ENCODE measurements at regions of chr11 and their contacts with region 1.

Region 1: GRCh38 chr11:11841723-11842420 is at the start of gene USP47:
- DNase-seq: peak; percentile 97
- ATAC-seq: peak; percentile 54
- H3K4me3 Mint-ChIP-seq: no peak within 1 kb of the TSS
- H3K27ac Mint-ChIP-seq: no peak within 1 kb of the TSS
- H3K4me1 Mint-ChIP-seq: peaks cover 28% of the 10 kb centered on the region
- H3K27me3 Mint-ChIP-seq: peaks cover 8% of the 10 kb centered on the region
- total RNA-seq, gene USP47: 43.3 to 56.3 TPM

Region 2: DNA sequence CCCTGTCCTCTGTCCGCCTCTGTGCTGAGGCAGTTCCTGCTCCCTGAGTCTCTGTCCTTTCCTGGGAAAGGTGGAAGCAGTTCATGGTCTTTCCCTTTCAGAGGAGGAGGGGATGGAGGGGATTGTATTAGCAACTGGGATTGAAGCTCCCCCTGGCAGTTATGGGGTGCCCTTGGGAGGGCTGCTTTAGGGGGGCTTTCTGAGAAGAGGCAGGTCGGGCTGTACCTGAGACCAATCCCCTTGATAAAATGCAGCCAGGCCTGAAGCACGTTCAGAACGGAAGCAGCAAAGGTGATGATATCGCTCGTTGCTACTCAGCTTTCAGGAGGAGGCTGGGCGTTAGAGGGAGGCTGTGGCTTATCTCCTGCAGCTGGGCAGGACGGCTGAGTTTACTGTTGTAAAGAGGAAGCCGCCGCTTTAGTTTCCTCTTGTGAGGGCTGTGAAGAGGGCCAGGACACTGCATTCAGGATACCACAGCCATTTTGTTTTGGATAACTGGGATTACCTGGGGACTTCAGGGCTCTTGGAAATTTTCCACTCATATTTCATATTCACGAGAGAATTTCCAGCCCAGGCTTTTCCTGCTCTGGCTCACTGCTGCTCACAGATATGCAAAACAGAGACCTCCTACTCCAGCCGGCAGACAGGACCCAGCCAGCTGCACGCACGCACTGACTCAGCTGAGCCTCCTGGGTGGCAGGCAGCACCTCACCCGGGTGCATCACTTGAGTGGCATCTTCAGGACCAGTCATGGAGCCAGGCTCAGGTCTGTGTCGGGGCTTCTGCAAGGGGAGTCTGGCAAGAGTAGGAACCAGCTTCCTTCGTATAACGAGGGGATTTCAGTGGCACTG is 1386.0 kb before region 1 on chr11:
- CTCF ChIA-PET with region 1: no interaction called
- POLR2A ChIA-PET with region 1: interaction called, 3 read pairs
- intact Hi-C with region 1: loop called (anchors 5 to 10 kb)
- DNase-seq: peak; percentile 91
- ATAC-seq: peak; percentile 80
- H3K4me3 Mint-ChIP-seq: peak overlapping the region; percentile 91
- H3K27ac Mint-ChIP-seq: peak overlapping the region; percentile 98
- H3K4me1 Mint-ChIP-seq: peaks cover 88% of the 10 kb centered on the region
- H3K27me3 Mint-ChIP-seq: no peaks in the 10 kb centered on the region

Region 3: DNA sequence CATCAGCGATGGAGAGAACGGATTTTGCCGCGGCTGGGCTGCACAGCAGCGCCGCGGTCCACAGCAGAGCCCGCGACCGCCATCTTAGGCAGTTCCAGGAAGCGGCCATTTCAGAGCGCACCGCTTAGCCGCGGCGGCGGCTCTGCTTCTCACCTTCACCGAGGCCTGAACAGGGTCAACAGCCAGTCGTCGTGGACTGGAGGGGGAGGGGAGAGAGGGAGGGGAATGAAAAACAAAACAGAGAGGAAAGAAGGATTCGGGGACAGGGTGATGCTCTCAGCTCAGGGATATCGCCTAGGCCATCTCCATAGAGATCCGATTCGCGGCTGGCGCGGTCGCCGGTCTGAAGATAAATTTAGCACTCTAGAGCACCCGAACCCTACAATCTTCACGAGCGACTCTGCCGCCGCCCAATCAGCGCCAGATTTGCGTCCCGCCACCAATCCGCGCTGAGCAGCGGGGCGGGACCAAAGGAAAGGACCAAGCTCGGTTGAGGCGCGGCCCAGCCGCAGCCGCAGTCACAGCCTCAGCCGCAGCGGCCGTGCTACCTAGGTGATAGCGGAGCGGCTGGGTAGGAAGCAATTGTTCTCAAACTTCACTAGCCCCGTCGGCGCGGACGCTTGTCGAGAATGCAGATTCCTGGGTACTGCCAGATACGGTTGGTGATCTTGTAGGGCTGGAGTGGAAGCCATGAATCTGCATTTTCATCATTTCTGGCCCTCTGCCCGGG is 984.0 kb before region 1 on chr11 and contains the start of gene ZBED5:
- CTCF ChIA-PET with region 1: no interaction called
- POLR2A ChIA-PET with region 1: interaction called, 4 read pairs
- intact Hi-C with region 1: loop called (anchors 1 to 5 kb)
- DNase-seq: peak; percentile 98
- ATAC-seq: peak; percentile 93
- H3K4me3 Mint-ChIP-seq: peak within 1 kb of the TSS; percentile 100
- H3K27ac Mint-ChIP-seq: peak within 1 kb of the TSS; percentile 100
- H3K4me1 Mint-ChIP-seq: peaks cover 40% of the 10 kb centered on the region
- H3K27me3 Mint-ChIP-seq: no peaks in the 10 kb centered on the region
- total RNA-seq, gene ZBED5: 34.1 to 44.3 TPM

Region 4: GRCh38 chr11:11657218-11657955 is 184.5 kb before region 1 on chr11:
- CTCF ChIA-PET with region 1: no interaction called
- POLR2A ChIA-PET with region 1: no interaction called
- intact Hi-C with region 1: no loop called
- DNase-seq: no peak
- ATAC-seq: no peak
- H3K4me3 Mint-ChIP-seq: no peak overlapping the region
- H3K27ac Mint-ChIP-seq: no peak overlapping the region
- H3K4me1 Mint-ChIP-seq: no peaks in the 10 kb centered on the region
- H3K27me3 Mint-ChIP-seq: peaks cover 13% of the 10 kb centered on the region

Region 5: DNA sequence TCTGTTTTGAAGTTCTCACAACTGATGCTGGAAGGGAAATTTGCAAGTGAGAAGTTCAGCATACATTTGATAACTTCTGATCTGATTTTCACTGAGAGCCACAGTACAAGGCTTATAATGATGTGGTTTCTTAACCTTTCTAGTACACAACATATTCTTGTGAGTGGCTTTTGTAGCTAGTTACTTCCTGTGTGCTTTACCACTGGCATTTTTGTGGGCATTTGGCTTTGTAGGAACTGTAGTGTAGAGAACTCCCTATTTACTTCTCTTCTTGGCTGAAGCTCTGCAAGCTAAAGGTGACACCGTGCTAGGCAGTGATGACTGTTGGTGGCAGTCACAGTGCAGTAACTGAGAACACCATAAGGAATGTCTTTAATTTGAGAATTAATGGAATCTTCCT is 14.8 kb after region 1 on chr11:
- CTCF ChIA-PET with region 1: interaction called, 7 read pairs
- POLR2A ChIA-PET with region 1: interaction called, 44 read pairs
- intact Hi-C with region 1: loop called in 1 of 2 experiments (anchors 1 kb)
- DNase-seq: peak; percentile 50
- ATAC-seq: peak; percentile 86
- H3K4me3 Mint-ChIP-seq: no peak overlapping the region
- H3K27ac Mint-ChIP-seq: peak overlapping the region; percentile 67
- H3K4me1 Mint-ChIP-seq: peaks cover 72% of the 10 kb centered on the region
- H3K27me3 Mint-ChIP-seq: no peaks in the 10 kb centered on the region

Region 6: GRCh38 chr11:12110201-12110713 is 268.4 kb after region 1 on chr11 and contains the start of gene MICAL2:
- CTCF ChIA-PET with region 1: no interaction called
- POLR2A ChIA-PET with region 1: no interaction called
- intact Hi-C with region 1: loop called in 1 of 2 experiments (anchors 10 kb)
- DNase-seq: peak; percentile 92
- ATAC-seq: peak; percentile 88
- H3K4me3 Mint-ChIP-seq: peak within 1 kb of the TSS; percentile 75
- H3K27ac Mint-ChIP-seq: peak within 1 kb of the TSS; percentile 90
- H3K4me1 Mint-ChIP-seq: peaks cover 41% of the 10 kb centered on the region
- H3K27me3 Mint-ChIP-seq: no peaks in the 10 kb centered on the region
- total RNA-seq, gene MICAL2: 186 to 207 TPM

Region 7: GRCh38 chr11:12200279-12201010 is 358.6 kb after region 1 on chr11:
- CTCF ChIA-PET with region 1: no interaction called
- POLR2A ChIA-PET with region 1: no interaction called
- intact Hi-C with region 1: loop called in 1 of 2 experiments (anchors 10 kb)
- DNase-seq: peak; percentile 72
- ATAC-seq: no peak
- H3K4me3 Mint-ChIP-seq: peak overlapping the region; percentile 82
- H3K27ac Mint-ChIP-seq: peak overlapping the region; percentile 71
- H3K4me1 Mint-ChIP-seq: peaks cover 90% of the 10 kb centered on the region
- H3K27me3 Mint-ChIP-seq: no peaks in the 10 kb centered on the region

Measured in activated CD4-positive, alpha-beta T cell treated with anti-CD3 and anti-CD28 coated beads for 36 hours (primary cell).